ENCODE measurements at regions of chr5 and their contacts with region 1.

Region 1: GRCh38 chr5:178838695-178839685 is 20.8 kb upstream of the ZNF354B start:
- DNase-seq: peak; percentile 16
- ATAC-seq: peak; percentile 88
- H3K4me3 ChIP-seq: no peak overlapping the region
- H3K27ac ChIP-seq: no peak overlapping the region
- H3K4me1 ChIP-seq: no peaks in the 10 kb centered on the region
- H3K27me3 ChIP-seq: no peaks in the 10 kb centered on the region
- CTCF ChIP-seq: peak; percentile 47 to 66 (median 61); a peak in 5 of 6 replicates
- POLR2A ChIP-seq: no peak
- RAD21 ChIP-seq: peak; percentile 77

Region 2: GRCh38 chr5:178279725-178280438 is 559.1 kb before region 1 on chr5:
- CTCF ChIA-PET with region 1: no interaction called
- POLR2A ChIA-PET with region 1: no interaction called
- RAD21 ChIA-PET with region 1: no interaction called
- intact Hi-C with region 1: loop called (anchors 2 kb)
- DNase-seq: peak; percentile 49
- ATAC-seq: peak; percentile 97
- H3K4me3 ChIP-seq: no peak overlapping the region
- H3K27ac ChIP-seq: no peak overlapping the region
- H3K4me1 ChIP-seq: peaks cover 0 to 4% of the 10 kb centered on the region in 2 experiments; a peak in 2 of 4 replicates
- H3K27me3 ChIP-seq: no peaks in the 10 kb centered on the region
- CTCF ChIP-seq: peak; percentile 87 to 97 (median 95)
- POLR2A ChIP-seq: no peak
- RAD21 ChIP-seq: peak; percentile 98

Region 3: GRCh38 chr5:178331399-178331996 is 507.5 kb before region 1 on chr5:
- CTCF ChIA-PET with region 1: no interaction called
- POLR2A ChIA-PET with region 1: no interaction called
- RAD21 ChIA-PET with region 1: no interaction called
- intact Hi-C with region 1: no loop called
- DNase-seq: no peak
- ATAC-seq: peak; percentile 60
- H3K4me3 ChIP-seq: no peak overlapping the region
- H3K27ac ChIP-seq: no peak overlapping the region
- H3K4me1 ChIP-seq: peaks cover 0 to 14% of the 10 kb centered on the region in 2 experiments; a peak in 1 of 4 replicates
- H3K27me3 ChIP-seq: no peaks in the 10 kb centered on the region
- CTCF ChIP-seq: no peak
- POLR2A ChIP-seq: no peak
- RAD21 ChIP-seq: no peak

Region 4: GRCh38 chr5:178577376-178577839 is 261.6 kb before region 1 on chr5:
- CTCF ChIA-PET with region 1: no interaction called
- POLR2A ChIA-PET with region 1: no interaction called
- RAD21 ChIA-PET with region 1: no interaction called
- intact Hi-C with region 1: no loop called
- DNase-seq: no peak
- ATAC-seq: no peak
- H3K4me3 ChIP-seq: no peak overlapping the region
- H3K27ac ChIP-seq: no peak overlapping the region
- H3K4me1 ChIP-seq: no peaks in the 10 kb centered on the region
- H3K27me3 ChIP-seq: peaks cover 3% of the 10 kb centered on the region; the same call in 1 of the 2 replicates
- CTCF ChIP-seq: no peak
- POLR2A ChIP-seq: no peak
- RAD21 ChIP-seq: no peak

Region 5: GRCh38 chr5:178793151-178793550 is 45.8 kb before region 1 on chr5:
- CTCF ChIA-PET with region 1: no interaction called
- POLR2A ChIA-PET with region 1: no interaction called
- RAD21 ChIA-PET with region 1: no interaction called
- intact Hi-C with region 1: loop called (anchors 1 kb)
- DNase-seq: peak; percentile 16
- ATAC-seq: peak; percentile 93
- H3K4me3 ChIP-seq: no peak overlapping the region
- H3K27ac ChIP-seq: no peak overlapping the region
- H3K4me1 ChIP-seq: peaks cover 0 to under 1% of the 10 kb centered on the region in 2 experiments; a peak in 1 of 4 replicates
- H3K27me3 ChIP-seq: no peaks in the 10 kb centered on the region
- CTCF ChIP-seq: peak; percentile 48 to 72 (median 69); a peak in 5 of 6 replicates
- POLR2A ChIP-seq: no peak
- RAD21 ChIP-seq: peak; percentile 72

Region 6: DNA sequence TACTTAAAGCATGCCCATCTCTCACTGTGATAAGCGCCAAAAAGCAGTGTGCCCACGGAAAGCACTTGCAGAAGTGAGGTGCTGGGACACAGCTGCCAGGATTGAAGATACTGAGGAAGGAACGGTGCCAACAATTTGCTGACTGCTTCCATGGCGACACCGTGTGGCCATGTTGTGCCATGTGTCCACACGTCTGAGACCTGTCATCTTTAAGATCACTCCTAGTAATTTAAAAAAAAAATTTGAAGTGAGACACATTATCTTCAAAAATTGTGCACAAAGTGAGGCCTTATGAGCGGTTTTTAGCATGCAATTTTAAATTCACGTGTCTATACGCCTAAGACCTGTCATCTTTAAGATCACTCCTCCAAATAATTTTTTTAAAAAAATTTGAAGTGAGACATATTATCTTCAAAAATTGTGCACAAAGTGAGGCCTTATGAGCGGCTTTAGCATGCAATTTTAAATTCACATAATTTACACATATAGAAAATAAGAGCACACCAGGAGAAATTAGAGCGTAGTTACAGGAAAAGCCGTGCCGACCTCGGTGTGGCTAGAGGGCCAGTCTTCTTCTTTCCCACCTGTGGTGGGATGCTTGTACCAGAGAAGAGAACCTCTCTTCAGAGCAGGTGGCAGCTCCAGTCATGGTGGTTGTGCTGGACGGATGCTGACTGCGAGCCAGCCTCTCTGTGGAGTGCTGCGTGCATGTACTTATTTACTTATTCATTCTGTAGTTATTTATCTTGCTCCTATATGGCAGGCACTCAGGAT is 1831.8 kb after region 1 on chr5:
- CTCF ChIA-PET with region 1: interaction called, 18 read pairs
- POLR2A ChIA-PET with region 1: no interaction called
- RAD21 ChIA-PET with region 1: interaction called in 1 of 2 experiments, 3 read pairs
- intact Hi-C with region 1: no loop called
- DNase-seq: peak; percentile 42
- ATAC-seq: peak; percentile 89
- H3K4me3 ChIP-seq: no peak overlapping the region
- H3K27ac ChIP-seq: no peak overlapping the region
- H3K4me1 ChIP-seq: peaks cover 0 to 3% of the 10 kb centered on the region in 2 experiments; a peak in 2 of 4 replicates
- H3K27me3 ChIP-seq: no peaks in the 10 kb centered on the region
- CTCF ChIP-seq: peak; percentile 70 to 82 (median 78)
- POLR2A ChIP-seq: no peak
- RAD21 ChIP-seq: peak; percentile 80

Measured in HCT116 (cell line).